Activated T-helper 2 cell treated with anti-CD3 and anti-CD28 coated beads, Interferon-gamma antibody, Interleukin-2, Interleukin-4, amounts not matched to agents 10 μg/mL and 5 μg/mL and 100 μg/mL, durations not matched to agents 14 hours and 24 hours and 36 hours (primary cell): ENCODE measurements at regions of chr20 and their contacts with region 1.

Region 1: DNA sequence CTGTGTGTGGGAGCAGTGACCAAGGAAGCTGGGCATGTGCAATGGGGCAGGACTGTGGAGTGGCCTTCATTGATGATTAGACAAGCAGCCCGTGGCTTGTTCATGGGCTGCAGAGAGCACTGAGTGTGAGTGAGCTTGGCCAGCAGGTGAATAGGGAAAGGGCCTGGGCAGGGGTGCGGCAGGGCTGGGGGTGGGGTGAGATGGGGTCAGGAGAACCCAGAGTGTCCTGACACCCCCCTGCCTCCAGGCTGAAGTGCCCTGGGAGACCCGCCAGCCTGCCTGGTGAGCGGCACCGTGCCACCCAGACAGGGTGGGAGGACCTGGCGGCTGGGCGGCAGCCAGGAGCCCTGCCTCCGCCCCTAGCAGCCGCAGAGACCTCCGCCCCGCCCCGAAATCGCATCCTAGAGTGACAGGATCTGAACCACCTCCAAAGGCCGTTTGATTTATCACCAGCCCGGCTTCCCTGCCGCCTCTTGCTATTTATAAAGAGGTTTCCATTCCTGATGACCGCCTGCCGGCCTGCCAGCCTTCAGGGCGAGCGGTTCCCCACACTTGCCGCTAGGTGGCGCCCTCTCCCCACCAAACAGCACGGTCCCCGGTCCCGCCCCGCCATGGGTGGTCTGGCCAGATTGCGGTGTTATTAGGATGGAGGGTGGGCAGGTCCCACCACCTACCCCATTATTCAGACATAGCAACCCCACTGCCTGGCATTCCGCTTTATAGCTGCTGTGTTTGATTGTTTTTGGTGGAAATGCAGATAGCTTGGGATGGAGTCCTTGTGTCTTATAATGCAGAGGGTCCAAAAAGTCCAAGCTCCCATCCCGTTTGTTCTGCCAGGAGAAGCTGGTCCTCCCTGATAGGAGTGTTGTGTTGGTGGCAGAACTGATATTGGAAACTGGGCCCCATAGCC is 3.5 kb downstream of the MYLK2 start:
- DNase-seq: peak; percentile 63
- H3K4me3 Mint-ChIP-seq: no peak overlapping the region
- H3K27ac Mint-ChIP-seq: no peak overlapping the region
- H3K4me1 Mint-ChIP-seq: peaks cover 5% of the 10 kb centered on the region
- H3K27me3 Mint-ChIP-seq: no peaks in the 10 kb centered on the region

Region 2: GRCh38 chr20:31951530-31952453 is 129.1 kb after region 1 on chr20 and contains the start of gene PDRG1:
- intact Hi-C with region 1: loop called (anchors 10 kb)
- DNase-seq: peak; percentile 95
- H3K4me3 Mint-ChIP-seq: peak within 1 kb of the TSS; percentile 86
- H3K27ac Mint-ChIP-seq: peak within 1 kb of the TSS; percentile 95
- H3K4me1 Mint-ChIP-seq: peaks cover 19% of the 10 kb centered on the region
- H3K27me3 Mint-ChIP-seq: peaks cover 7% of the 10 kb centered on the region
- total RNA-seq, gene PDRG1: 15.5 and 16.4 TPM in 2 replicates

Region 3: DNA sequence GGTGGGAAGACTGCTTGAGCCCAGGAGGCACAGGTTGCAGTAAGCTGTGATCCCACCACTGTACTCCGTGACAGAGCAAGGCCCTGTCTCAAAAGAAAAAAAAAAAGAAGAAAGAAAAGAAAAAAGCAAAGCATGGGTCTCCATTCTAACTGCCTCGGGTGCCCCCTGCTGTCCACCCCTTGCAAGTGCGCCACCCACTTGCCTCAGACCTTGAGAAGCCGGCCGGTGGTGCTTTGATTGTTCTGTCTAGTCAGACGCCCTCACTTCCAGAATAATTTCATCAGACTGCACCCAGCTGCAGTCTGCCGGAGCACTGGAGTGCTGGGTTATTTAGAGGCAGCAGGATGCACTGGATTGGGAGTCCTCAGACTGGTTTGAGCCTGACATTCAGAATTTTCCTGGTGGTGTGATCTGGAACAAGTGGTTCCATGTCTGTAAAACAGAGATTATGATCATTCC is 269.2 kb after region 1 on chr20:
- intact Hi-C with region 1: loop called (anchors 2 kb)
- DNase-seq: peak; percentile 63
- H3K4me3 Mint-ChIP-seq: no peak overlapping the region
- H3K27ac Mint-ChIP-seq: no peak overlapping the region
- H3K4me1 Mint-ChIP-seq: peaks cover 2% of the 10 kb centered on the region
- H3K27me3 Mint-ChIP-seq: peaks cover 19% of the 10 kb centered on the region